Dendritic cell treated with granulocyte-macrophage colony-stimulating factor and Interleukin-4, amounts not matched to agents 40 ng/mL and 50 ng/mL, for 4 days (primary cell): ENCODE measurements at regions of chr15 and their contacts with region 1.

Region 1: GRCh38 chr15:38260077-38260476 is 7.4 kb downstream of the SPRED1 start:
- H3K4me3 Mint-ChIP-seq: no peak overlapping the region
- H3K27ac Mint-ChIP-seq: no peak overlapping the region
- H3K4me1 Mint-ChIP-seq: peaks cover 22% of the 10 kb centered on the region
- H3K27me3 Mint-ChIP-seq: no peaks in the 10 kb centered on the region

Region 2: DNA sequence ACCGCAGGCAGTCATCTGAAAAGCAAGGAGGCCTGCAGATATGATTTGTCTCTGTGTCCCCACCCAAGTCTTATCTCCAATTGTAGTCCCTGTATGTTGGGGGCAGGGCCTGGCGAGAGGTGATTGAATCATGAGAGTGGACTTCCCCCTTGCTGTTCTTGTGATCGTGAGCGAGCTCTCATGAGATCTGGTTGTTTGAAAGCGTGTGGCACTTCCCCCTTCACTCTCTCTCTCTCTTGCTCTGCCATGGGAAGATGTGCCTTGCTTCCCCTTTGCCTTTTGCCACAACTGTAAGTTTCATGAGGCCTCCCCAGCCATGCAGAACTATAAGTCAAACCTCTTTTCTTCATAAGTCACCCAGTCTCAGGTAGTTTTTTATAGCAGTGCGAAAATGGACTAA is 242.4 kb before region 1 on chr15:
- intact Hi-C with region 1: no loop called
- H3K4me3 Mint-ChIP-seq: no peak overlapping the region
- H3K27ac Mint-ChIP-seq: peak overlapping the region; percentile 94
- H3K4me1 Mint-ChIP-seq: peaks cover 66% of the 10 kb centered on the region
- H3K27me3 Mint-ChIP-seq: no peaks in the 10 kb centered on the region

Region 3: GRCh38 chr15:38275959-38276358 is 15.9 kb after region 1 on chr15:
- intact Hi-C with region 1: no loop called
- H3K4me3 Mint-ChIP-seq: no peak overlapping the region
- H3K27ac Mint-ChIP-seq: no peak overlapping the region
- H3K4me1 Mint-ChIP-seq: peaks cover 29% of the 10 kb centered on the region
- H3K27me3 Mint-ChIP-seq: no peaks in the 10 kb centered on the region

Region 4: DNA sequence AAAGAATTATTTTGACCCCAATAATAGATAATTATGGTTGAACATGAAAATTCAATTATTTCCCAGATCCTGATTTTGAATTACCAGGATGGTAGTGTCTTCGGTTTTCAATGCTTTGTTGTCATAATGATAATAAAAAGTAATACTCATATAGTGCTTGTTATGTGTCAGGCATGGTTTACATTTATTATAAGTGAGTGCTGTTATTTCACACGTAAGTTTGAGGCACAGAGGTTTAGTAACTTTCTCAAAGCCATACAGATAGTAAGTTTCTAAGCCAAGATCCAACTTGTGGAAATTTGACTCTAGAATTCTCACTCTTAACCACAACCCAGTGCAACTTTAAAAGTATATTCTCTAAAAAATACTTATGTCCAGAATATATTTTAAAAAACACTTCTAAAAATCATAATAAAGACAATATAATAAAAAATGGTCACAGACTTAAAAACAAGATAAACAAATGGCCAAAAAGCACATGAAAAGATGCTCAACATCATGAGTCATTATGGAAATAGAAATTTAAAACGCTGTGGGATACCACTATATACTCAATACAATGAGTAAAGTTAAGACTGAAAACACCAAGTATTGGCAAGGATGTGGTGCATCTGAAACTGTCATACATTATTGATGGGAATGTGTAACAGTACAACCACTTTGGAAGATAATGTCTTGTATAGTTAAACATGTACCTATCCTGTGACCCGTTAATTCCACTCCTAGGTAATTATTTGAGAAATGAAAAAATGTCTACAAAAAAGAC is 37.7 kb after region 1 on chr15:
- intact Hi-C with region 1: loop called (anchors 5 kb)
- H3K4me3 Mint-ChIP-seq: no peak overlapping the region
- H3K27ac Mint-ChIP-seq: no peak overlapping the region
- H3K4me1 Mint-ChIP-seq: peaks cover 30% of the 10 kb centered on the region
- H3K27me3 Mint-ChIP-seq: no peaks in the 10 kb centered on the region